ENCODE measurements at regions of chr7 and their contacts with region 1.

Region 1: GRCh38 chr7:95544171-95544570 is 52.1 kb downstream of the PDK4 start:
- DNase-seq: no peak
- H3K4me3 ChIP-seq: no peak overlapping the region
- H3K27ac ChIP-seq: peak overlapping the region; percentile 78 to 89
- H3K4me1 ChIP-seq: peaks cover 0 to 5% of the 10 kb centered on the region in 2 donors
- H3K27me3 ChIP-seq: no peaks in the 10 kb centered on the region
- CTCF ChIP-seq: no peak
- POLR2A ChIP-seq: no peak

Region 2: GRCh38 chr7:95684037-95684436 is 139.9 kb after region 1 on chr7:
- intact Hi-C with region 1: loop called (anchors 5 kb)
- DNase-seq: no peak
- H3K4me3 ChIP-seq: no peak overlapping the region
- H3K27ac ChIP-seq: peak overlapping the region in 1 of 2 donors; percentile 57
- H3K4me1 ChIP-seq: no peaks in the 10 kb centered on the region
- H3K27me3 ChIP-seq: no peaks in the 10 kb centered on the region
- CTCF ChIP-seq: peak; percentile 58 to 87 (median 68)
- POLR2A ChIP-seq: no peak